ENCODE measurements at regions of chr11 and their contacts with region 1.

Region 1: GRCh38 chr11:77091146-77091940 is 11.3 kb upstream of the OMP start:
- DNase-seq: no peak
- H3K4me3 ChIP-seq: no peak overlapping the region
- CTCF ChIP-seq: peak; percentile 97

Region 2: DNA sequence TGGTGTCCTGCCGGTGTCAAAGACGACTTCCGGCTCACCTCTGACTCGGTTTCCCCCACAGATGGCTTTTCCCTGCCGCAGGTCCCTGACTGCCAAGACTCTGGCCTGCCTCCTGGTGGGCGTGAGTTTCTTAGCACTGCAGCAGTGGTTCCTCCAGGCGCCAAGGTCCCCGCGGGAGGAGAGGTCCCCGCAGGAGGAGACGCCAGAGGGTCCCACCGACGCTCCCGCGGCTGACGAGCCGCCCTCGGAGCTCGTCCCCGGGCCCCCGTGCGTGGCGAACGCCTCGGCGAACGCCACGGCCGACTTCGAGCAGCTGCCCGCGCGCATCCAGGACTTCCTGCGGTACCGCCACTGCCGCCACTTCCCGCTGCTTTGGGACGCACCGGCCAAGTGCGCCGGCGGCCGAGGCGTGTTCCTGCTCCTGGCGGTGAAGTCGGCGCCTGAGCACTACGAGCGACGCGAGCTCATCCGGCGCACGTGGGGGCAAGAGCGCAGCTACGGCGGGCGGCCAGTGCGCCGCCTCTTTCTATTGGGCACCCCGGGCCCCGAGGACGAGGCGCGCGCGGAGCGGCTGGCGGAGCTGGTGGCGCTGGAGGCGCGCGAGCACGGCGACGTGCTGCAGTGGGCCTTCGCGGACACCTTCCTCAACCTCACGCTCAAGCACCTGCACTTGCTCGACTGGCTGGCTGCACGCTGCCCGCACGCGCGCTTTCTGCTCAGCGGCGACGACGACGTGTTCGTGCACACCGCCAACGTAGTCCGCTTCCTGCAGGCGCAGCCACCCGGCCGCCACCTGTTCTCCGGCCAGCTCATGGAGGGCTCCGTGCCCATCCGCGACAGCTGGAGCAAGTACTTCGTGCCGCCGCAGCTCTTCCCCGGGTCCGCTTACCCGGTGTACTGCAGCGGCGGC is 51.6 kb before region 1 on chr11:
- CTCF ChIA-PET with region 1: interaction called, 62 read pairs
- POLR2A ChIA-PET with region 1: no interaction called
- DNase-seq: no peak
- H3K4me3 ChIP-seq: peak overlapping the region; percentile 49
- CTCF ChIP-seq: peak; percentile 69

Region 3: DNA sequence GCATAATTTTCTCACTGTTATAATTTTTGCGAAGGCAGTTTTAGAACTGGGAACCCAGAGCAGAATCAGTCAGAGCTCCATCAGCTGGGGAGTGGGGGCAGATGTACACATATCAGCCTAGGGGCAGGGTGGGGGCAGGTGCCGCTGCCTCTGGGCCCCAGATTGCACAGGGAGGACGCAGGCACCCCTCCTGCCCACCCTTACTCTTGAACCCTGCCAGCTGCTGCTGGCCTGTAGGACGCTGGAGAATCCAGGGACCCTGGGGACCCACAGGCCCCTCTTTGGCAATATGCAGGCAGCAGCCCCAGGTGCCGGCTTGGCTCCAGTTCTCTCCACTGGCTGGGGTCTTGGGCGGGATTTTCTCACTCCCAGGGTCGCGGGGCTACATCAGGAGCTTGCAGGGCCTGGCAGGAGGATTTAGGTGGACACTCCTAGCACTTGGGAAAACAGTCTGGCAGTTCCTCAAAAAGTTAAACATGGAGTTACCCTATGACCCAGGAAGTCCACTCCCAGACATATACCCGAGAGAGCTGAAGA is 33.3 kb before region 1 on chr11:
- CTCF ChIA-PET with region 1: interaction called, 320 read pairs
- POLR2A ChIA-PET with region 1: no interaction called
- DNase-seq: no peak
- H3K4me3 ChIP-seq: no peak overlapping the region
- CTCF ChIP-seq: no peak

Region 4: GRCh38 chr11:77066229-77067042 is 24.9 kb before region 1 on chr11 and contains the start of gene CAPN5:
- CTCF ChIA-PET with region 1: interaction called, 86 read pairs
- POLR2A ChIA-PET with region 1: interaction called, 3 read pairs
- DNase-seq: no peak
- H3K4me3 ChIP-seq: peak within 1 kb of the TSS; percentile 72
- CTCF ChIP-seq: peak; percentile 67

Region 5: DNA sequence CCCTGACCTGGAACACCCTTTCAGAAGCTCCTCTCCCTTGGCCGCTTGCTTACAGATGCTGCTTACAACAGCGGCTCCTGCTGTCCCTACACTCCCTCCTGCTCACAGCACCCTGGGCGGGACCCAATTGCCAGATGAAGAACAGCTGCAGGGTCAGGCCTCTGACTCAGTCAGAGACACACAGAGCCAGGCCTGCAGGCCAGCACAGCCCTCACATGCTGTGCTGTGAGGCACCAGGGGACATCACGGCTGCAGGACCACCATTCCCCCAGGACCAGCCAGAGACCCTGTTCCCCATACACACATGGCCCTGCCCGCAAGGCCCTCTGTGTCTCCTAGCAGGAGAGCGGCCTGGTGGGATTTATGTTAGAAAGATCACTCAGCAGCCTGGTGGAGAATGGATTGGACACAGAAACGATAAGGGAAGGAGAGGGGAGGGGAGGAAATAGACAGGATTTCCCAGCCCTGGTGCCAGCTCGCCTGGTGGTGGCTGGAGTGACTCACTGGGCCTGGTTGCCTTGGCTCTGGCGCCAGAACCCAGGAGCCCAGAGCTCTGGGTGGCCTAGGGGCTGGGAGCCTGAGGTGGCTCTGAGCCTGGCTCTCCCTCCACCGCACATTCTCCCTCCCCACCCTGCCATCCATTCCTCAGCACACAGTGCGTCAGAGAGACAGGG is 17.9 kb before region 1 on chr11:
- CTCF ChIA-PET with region 1: interaction called, 160 read pairs
- POLR2A ChIA-PET with region 1: no interaction called
- DNase-seq: peak; percentile 49
- H3K4me3 ChIP-seq: no peak overlapping the region
- CTCF ChIP-seq: peak; percentile 61

Region 6: DNA sequence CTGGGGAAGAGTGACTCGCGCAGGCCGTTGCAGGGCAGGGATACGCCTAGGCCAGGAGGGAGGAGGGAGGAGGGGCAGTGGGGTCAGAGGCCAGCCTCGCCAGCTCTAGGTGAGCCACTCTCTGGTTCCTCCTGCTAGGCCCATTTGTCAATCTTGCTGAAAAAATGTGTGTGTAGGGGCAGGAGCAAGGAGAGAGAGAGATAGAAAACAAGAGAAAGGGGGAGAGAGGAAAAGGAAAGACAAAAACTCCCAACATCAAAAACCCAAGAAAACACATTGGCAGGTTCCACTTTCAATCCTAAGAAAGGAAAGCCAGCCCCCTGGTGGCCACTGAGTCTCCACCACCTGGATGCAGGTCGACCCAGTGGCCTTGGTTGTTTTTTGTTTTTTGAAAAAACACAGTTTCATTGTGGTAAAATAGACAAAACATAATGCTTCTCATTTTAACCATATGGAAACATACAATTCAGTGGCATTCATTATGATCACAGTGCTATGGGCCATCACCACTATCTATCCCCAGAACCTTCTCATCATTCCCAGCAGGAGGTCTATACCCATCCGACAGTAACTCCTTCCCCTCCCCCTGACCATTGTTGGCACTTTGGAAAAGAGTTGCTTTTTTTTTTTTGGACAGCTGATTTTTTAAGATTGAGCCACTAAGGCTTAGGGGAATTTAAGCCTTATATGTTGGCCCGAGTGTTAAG is 22.2 kb after region 1 on chr11:
- CTCF ChIA-PET with region 1: interaction called, 273 read pairs
- POLR2A ChIA-PET with region 1: no interaction called
- DNase-seq: no peak
- H3K4me3 ChIP-seq: no peak overlapping the region
- CTCF ChIP-seq: peak; percentile 58

Region 7: GRCh38 chr11:77187776-77188632 is 96.7 kb after region 1 on chr11:
- CTCF ChIA-PET with region 1: interaction called, 22 read pairs
- POLR2A ChIA-PET with region 1: no interaction called
- DNase-seq: peak; percentile 21
- H3K4me3 ChIP-seq: no peak overlapping the region
- CTCF ChIP-seq: peak; percentile 86